HEK293 (cell line): ENCODE measurements at regions of chr6 and their contacts with region 1.

Region 1: GRCh38 chr6:32637219-32637880 is at the start of gene HLA-DQA1:
- H3K4me3 ChIP-seq: no peak within 1 kb of the TSS
- H3K27ac ChIP-seq: peak within 1 kb of the TSS; percentile 21; the same call in 1 of the 2 replicates
- H3K4me1 ChIP-seq: peaks cover 17% of the 10 kb centered on the region
- CTCF ChIP-seq: no peak

Region 2: DNA sequence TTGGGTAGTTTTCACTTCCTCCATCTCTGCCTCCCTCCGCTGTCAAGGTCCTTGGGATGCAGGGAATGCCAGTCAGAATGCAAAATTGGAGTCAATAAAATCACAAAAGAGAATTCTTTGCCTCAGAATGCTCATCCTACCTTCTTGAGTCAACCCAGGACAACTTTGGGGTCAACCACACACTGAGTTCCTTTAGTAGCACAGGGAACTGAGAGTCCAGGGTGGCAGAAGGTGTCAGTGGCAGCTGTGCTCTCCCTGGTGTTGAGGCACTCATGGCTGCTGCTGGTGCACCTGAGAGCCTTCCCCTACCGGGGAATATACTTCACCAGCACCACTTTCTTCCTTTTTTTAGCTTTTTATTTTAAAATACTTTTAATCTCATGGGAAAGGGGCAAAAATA is 412.7 kb before region 1 on chr6:
- CTCF ChIA-PET with region 1: no interaction called
- POLR2A ChIA-PET with region 1: no interaction called
- H3K4me3 ChIP-seq: no peak overlapping the region
- H3K27ac ChIP-seq: no peak overlapping the region
- H3K4me1 ChIP-seq: no peaks in the 10 kb centered on the region
- CTCF ChIP-seq: no peak

Region 3: DNA sequence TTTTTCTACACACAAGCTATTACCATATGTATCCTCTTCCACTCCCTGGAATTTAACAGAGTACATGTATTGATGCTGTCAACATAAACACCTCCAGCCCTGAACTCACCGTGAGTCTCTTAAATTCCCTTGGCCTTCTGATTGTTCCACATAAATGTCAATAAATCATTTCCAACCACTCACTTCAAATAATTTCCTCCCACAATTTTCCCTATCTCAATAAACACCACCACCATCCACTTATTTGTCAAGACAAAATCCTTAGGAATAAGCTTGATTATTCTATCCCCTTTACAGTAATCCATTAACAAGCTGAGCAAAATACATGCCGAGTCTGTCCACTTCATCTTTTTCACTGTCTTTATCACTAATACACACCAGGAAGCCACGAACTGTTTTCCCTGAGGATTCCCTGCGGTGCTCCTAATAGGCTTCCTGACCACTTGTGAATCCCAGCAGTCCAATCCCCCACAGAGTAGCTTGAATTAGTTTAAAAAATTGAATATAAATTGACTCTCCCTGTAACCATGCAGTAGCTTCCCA is 66.9 kb before region 1 on chr6:
- CTCF ChIA-PET with region 1: interaction called, 10 read pairs
- POLR2A ChIA-PET with region 1: no interaction called
- H3K4me3 ChIP-seq: no peak overlapping the region
- H3K27ac ChIP-seq: no peak overlapping the region
- H3K4me1 ChIP-seq: peaks cover 10% of the 10 kb centered on the region; the same call in 1 of the 2 replicates
- CTCF ChIP-seq: no peak

Region 4: DNA sequence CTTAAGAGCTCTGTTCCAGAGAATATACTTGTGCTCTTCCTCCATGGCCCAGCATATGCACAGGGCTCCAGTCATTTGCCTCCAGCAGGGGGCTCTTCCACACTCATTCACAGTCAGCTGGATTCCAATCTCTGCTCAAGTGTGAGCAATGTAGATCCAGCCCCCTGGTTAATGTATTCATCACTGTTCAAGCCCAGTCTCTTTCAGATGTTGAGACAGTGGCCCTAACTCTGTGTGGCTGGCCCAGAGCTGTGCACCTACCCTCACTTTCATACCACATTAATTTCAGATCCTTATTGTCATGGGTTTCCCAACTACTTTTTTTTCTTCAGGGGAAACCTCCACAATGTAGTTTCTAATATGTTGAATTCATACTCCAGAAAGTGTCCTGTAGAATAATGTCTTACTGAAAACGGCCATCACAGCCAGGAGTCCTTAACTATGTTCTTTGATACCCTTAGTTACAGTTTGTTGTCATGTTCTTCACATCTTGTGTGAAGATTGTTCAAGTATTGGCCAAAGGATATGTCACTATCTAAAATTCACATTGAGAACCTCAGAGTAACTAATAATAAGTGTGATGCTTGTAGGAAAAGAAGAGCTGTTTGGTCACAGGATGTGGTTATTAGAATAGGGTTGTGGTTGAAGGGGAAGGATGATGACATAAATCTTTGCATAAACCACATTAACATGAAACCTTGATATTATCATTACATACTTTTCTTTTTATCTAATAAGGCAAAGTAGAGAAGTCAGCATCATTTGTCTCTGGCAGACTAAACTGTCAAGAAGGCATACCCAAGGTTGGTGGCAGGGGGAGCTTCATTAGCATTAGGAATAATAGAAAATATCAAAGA is 14.6 kb before region 1 on chr6:
- CTCF ChIA-PET with region 1: interaction called, 101 read pairs
- POLR2A ChIA-PET with region 1: no interaction called
- H3K4me3 ChIP-seq: no peak overlapping the region
- H3K27ac ChIP-seq: no peak overlapping the region
- H3K4me1 ChIP-seq: peaks cover 18% of the 10 kb centered on the region
- CTCF ChIP-seq: no peak